ENCODE measurements at regions of chr2 and their contacts with region 1.

Region 1: GRCh38 chr2:195318440-195319111 is 338.4 kb upstream of the SLC39A10 start:
- DNase-seq: peak; percentile 35
- H3K4me3 Mint-ChIP-seq: no peak overlapping the region
- H3K27ac Mint-ChIP-seq: no peak overlapping the region
- H3K4me1 Mint-ChIP-seq: peaks cover 8% of the 10 kb centered on the region
- H3K27me3 Mint-ChIP-seq: no peaks in the 10 kb centered on the region

Region 2: DNA sequence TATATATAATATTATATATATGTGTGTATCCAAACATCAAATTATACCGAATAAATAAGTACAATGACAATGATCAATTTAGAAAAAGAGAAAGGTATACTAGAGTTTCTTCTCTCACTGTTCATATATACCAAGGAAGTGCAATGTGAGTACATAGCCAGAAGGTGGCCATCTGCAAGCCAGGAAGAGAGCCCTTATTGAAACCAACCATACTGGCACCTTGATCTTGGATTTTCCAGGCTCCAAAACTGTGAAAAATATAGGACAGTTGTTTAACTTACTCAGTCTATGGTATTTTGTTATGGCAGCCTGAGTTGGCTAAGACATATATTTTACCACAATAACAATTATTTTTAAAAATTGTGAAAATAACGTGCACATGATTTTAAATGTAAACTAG is 1151.8 kb before region 1 on chr2:
- CTCF ChIA-PET with region 1: interaction called, 3 read pairs
- POLR2A ChIA-PET with region 1: no interaction called
- intact Hi-C with region 1: loop called (anchors 1 kb)
- DNase-seq: no peak
- H3K4me3 Mint-ChIP-seq: no peak overlapping the region
- H3K27ac Mint-ChIP-seq: no peak overlapping the region
- H3K4me1 Mint-ChIP-seq: no peaks in the 10 kb centered on the region
- H3K27me3 Mint-ChIP-seq: no peaks in the 10 kb centered on the region

Region 3: DNA sequence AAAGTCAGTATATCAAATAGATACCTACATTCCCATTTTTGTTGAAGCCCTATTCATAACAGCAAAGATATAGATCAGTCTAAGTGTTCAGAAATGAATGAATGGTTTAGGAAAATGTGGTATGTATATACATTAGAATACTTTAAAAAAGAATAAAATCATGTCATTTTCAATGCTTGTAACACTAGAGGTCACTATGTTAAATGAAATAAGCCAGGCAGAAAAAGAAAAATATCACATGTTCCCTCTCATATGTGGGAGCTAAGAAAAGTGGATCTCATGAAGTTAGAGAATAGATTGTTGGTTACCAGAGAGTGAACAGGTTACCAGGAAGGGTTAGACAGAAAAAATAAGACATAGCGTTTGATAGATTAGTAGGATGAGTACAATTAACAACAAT is 772.6 kb before region 1 on chr2:
- CTCF ChIA-PET with region 1: no interaction called
- POLR2A ChIA-PET with region 1: no interaction called
- intact Hi-C with region 1: loop called (anchors 2 kb)
- DNase-seq: no peak
- H3K4me3 Mint-ChIP-seq: no peak overlapping the region
- H3K27ac Mint-ChIP-seq: no peak overlapping the region
- H3K4me1 Mint-ChIP-seq: no peaks in the 10 kb centered on the region
- H3K27me3 Mint-ChIP-seq: peaks cover 3% of the 10 kb centered on the region

Region 4: GRCh38 chr2:194985258-194985657 is 333.3 kb before region 1 on chr2:
- CTCF ChIA-PET with region 1: no interaction called
- POLR2A ChIA-PET with region 1: no interaction called
- intact Hi-C with region 1: no loop called
- DNase-seq: no peak
- H3K4me3 Mint-ChIP-seq: no peak overlapping the region
- H3K27ac Mint-ChIP-seq: no peak overlapping the region
- H3K4me1 Mint-ChIP-seq: no peaks in the 10 kb centered on the region
- H3K27me3 Mint-ChIP-seq: no peaks in the 10 kb centered on the region

Measured in activated CD4-positive, alpha-beta memory T cell treated with anti-CD3 and anti-CD28 coated beads for 36 hours (primary cell).